ENCODE measurements at regions of chr5 and their contacts with region 1.

Region 1: DNA sequence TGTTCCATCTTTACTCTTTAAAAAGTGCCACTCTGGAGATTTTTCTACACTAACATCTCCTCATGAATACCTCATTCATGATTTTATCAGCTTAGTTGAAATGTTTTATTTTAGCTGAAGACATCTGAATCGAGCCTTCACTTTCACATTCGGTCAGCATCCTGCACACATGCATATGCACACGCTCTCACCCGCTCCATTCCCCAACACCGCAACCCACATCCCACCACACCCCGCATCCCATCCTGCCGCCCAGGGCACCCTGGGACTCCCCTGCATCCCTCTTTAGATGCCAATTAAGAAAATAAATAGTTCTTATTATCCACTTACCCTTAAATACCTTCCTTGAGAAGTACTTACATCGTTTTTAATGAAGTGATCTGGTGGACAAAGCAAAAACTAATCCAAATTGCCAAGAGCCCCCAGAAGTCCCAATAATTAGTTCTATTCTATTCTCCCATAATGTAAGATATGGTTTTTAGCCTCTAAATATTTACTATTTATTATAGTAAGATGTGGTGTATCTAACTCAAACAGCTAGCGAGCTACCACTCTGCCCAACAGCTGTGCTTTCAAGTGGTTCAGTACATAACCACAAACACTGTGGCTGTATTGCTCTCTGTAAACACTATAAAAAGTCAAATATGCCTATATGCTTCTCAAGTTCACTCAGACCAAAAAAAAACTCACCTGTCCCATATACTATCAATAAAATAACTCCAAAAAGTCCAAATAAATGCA is 38.2 kb downstream of the GZMK start:
- DNase-seq: no peak
- ATAC-seq: no peak
- H3K4me3 ChIP-seq: no peak overlapping the region
- H3K27ac ChIP-seq: no peak overlapping the region
- H3K4me1 ChIP-seq: no peaks in the 10 kb centered on the region
- H3K27me3 ChIP-seq: no peaks in the 10 kb centered on the region
- CTCF ChIP-seq: no peak
- EP300 ChIP-seq: no peak
- POLR2A ChIP-seq: no peak
- RAD21 ChIP-seq: no peak

Region 2: GRCh38 chr5:55027595-55027994 is 34.6 kb before region 1 on chr5:
- CTCF ChIA-PET with region 1: no interaction called
- POLR2A ChIA-PET with region 1: no interaction called
- in situ Hi-C with region 1: no loop called
- intact Hi-C with region 1: no loop called
- DNase-seq: no peak
- ATAC-seq: no peak
- H3K4me3 ChIP-seq: no peak overlapping the region
- H3K27ac ChIP-seq: no peak overlapping the region
- H3K4me1 ChIP-seq: no peaks in the 10 kb centered on the region
- H3K27me3 ChIP-seq: peaks cover 0 to 5% of the 10 kb centered on the region in 2 experiments; a peak in 2 of 5 replicates
- CTCF ChIP-seq: no peak
- EP300 ChIP-seq: no peak
- POLR2A ChIP-seq: no peak
- RAD21 ChIP-seq: no peak

Region 3: DNA sequence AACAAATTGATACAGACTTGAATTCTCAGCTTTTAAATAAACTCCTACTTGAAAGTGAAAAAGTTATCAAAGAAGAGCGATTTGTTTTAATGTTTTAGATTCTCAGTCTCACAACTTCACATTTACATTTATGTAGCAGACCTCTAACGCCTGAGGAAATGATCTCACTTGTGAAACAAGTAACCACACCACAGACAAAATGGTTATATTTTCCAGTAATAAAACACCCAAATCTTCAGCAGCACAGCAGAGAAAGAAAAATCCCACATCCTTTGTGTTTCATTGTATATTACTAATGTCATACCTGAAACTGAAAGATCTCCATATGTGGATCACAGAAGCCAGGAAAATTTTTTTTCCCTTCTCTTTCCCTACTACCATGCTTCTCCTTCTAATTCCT is 10.5 kb after region 1 on chr5:
- CTCF ChIA-PET with region 1: no interaction called
- POLR2A ChIA-PET with region 1: no interaction called
- in situ Hi-C with region 1: no loop called
- intact Hi-C with region 1: no loop called
- DNase-seq: no peak
- ATAC-seq: no peak
- H3K4me3 ChIP-seq: no peak overlapping the region
- H3K27ac ChIP-seq: no peak overlapping the region
- H3K4me1 ChIP-seq: no peaks in the 10 kb centered on the region
- H3K27me3 ChIP-seq: no peaks in the 10 kb centered on the region
- CTCF ChIP-seq: no peak
- EP300 ChIP-seq: no peak
- POLR2A ChIP-seq: no peak
- RAD21 ChIP-seq: no peak

Region 4: GRCh38 chr5:55110217-55110616 is 48.0 kb after region 1 on chr5:
- CTCF ChIA-PET with region 1: no interaction called
- POLR2A ChIA-PET with region 1: no interaction called
- in situ Hi-C with region 1: no loop called
- intact Hi-C with region 1: loop called (anchors 5 kb)
- DNase-seq: no peak
- ATAC-seq: no peak
- H3K4me3 ChIP-seq: no peak overlapping the region
- H3K27ac ChIP-seq: no peak overlapping the region
- H3K4me1 ChIP-seq: no peaks in the 10 kb centered on the region
- H3K27me3 ChIP-seq: 0 out of 5 replicates have a peak, but pooled peaks cover 0 to 1% of the 10 kb centered on the region in 2 experiments
- CTCF ChIP-seq: no peak
- EP300 ChIP-seq: no peak
- POLR2A ChIP-seq: no peak
- RAD21 ChIP-seq: no peak

Region 5: DNA sequence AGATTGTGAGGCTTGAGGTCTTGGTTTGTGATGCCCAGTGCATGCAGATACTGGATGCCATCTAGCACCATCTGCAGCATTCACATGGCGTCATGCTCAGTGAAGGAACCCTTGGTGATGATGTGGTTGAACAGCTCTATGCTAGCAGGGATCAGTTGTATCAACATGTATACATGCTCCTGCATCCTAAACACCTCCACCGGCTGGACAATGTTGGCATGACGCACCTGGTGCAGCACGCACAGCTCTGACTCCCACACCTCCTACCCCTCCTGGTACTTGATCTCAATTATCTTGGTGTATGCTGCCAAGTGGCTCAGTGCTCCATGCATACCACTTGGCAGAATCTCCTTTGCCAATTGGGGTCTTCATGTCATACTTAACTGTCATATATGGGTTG is 294.7 kb after region 1 on chr5:
- CTCF ChIA-PET with region 1: no interaction called
- POLR2A ChIA-PET with region 1: no interaction called
- in situ Hi-C with region 1: no loop called
- intact Hi-C with region 1: no loop called
- DNase-seq: no peak
- ATAC-seq: peak; percentile 63
- H3K4me3 ChIP-seq: no peak overlapping the region
- H3K27ac ChIP-seq: no peak overlapping the region
- H3K4me1 ChIP-seq: no peaks in the 10 kb centered on the region
- H3K27me3 ChIP-seq: no peaks in the 10 kb centered on the region
- CTCF ChIP-seq: no peak
- EP300 ChIP-seq: no peak
- POLR2A ChIP-seq: no peak
- RAD21 ChIP-seq: no peak

Measured in HepG2 (cell line).